Heart right ventricle (tissue), 16 donors: ENCODE measurements at regions of chr11 and their contacts with region 1.

Region 1: GRCh38 chr11:63536669-63537292 is at the start of gene PLAAT4:
- DNase-seq: peak; percentile 21 to 31
- ATAC-seq: peak; percentile 54 to 75 (median 64)
- H3K4me3 ChIP-seq: peak within 1 kb of the TSS; percentile 26 to 61 (median 54)
- H3K27ac ChIP-seq: peak within 1 kb of the TSS; percentile 66 to 95 (median 85)
- H3K4me1 ChIP-seq: peaks cover 8 to 79% (median 27%) of the 10 kb centered on the region in 9 donors
- H3K27me3 ChIP-seq: no peaks in the 10 kb centered on the region
- CTCF ChIP-seq: peak in 2 of 9 donors; percentile 5 to 9
- total RNA-seq, gene PLAAT4: 3.3 to 565 (median 7.7) TPM

Region 2: DNA sequence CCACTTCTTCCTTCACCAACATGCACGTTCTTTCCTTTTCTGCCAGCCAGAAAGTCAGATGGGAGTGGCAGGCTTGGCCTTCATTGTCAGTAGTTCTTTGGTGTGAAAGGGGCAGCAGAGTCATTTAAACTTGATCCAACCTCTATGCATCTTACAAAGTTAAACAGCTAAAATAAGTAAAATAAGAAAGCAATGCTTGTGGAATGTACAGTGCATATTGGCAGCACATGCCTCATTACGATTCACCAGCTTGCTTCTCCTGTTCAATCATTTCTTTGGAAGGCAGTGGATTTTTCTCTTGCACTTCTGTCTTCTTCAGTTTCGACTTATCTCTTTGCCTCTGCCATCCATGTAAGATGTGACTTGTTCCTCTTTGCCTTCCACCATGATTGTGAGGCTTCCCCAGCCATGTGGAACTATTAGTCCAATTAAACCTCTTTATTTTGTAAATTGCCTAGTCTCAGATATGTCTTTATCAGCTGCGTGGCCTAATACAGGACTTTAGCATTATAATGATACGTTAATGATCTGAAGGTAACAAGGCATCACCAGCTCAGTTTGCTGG is 16.1 kb before region 1 on chr11:
- intact Hi-C with region 1: loop called in 1 of 10 experiments (anchors 1 kb)
- DNase-seq: no peak
- ATAC-seq: no peak
- H3K4me3 ChIP-seq: no peak overlapping the region
- H3K27ac ChIP-seq: no peak overlapping the region
- H3K4me1 ChIP-seq: no peaks in the 10 kb centered on the region
- H3K27me3 ChIP-seq: no peaks in the 10 kb centered on the region
- CTCF ChIP-seq: no peak

Region 3: GRCh38 chr11:63614136-63614664 is 77.4 kb after region 1 on chr11 and contains the start of gene PLAAT3:
- intact Hi-C with region 1: loop called in 2 of 10 experiments (anchors 1 to 10 kb)
- DNase-seq: peak; percentile 82 to 90
- ATAC-seq: peak; percentile 90 to 96 (median 92)
- H3K4me3 ChIP-seq: peak within 1 kb of the TSS; percentile 63 to 95 (median 79)
- H3K27ac ChIP-seq: peak within 1 kb of the TSS; percentile 80 to 96 (median 89)
- H3K4me1 ChIP-seq: peaks cover 7 to 47% (median 43%) of the 10 kb centered on the region in 9 donors
- H3K27me3 ChIP-seq: peaks cover 0 to 21% (median 0%) of the 10 kb centered on the region in 7 donors
- CTCF ChIP-seq: peak in 1 of 9 donors; percentile 11
- total RNA-seq, gene PLAAT3: 82.8 to 211 (median 137) TPM